H1 (cell line): ENCODE measurements at regions of chr1 and their contacts with region 1.

Region 1: GRCh38 chr1:160997323-160998038 is 23.5 kb downstream of the F11R start:
- DNase-seq: no peak
- H3K4me3 ChIP-seq: no peak overlapping the region
- H3K27ac ChIP-seq: no peak overlapping the region
- H3K4me1 ChIP-seq: peaks cover 0 to 3% (median 0%) of the 10 kb centered on the region in 4 experiments; a peak in 1 of 7 replicates
- H3K27me3 ChIP-seq: no peaks in the 10 kb centered on the region
- CTCF ChIP-seq: peak; percentile 57 to 77 (median 71)
- EP300 ChIP-seq: no peak
- POLR2A ChIP-seq: no peak
- RAD21 ChIP-seq: peak; percentile 63 to 80

Region 2: GRCh38 chr1:161013488-161014230 is 16.2 kb after region 1 on chr1:
- CTCF ChIA-PET with region 1: interaction called, 58 read pairs
- POLR2A ChIA-PET with region 1: interaction called, 11 read pairs
- DNase-seq: peak in 1 of 2 experiments; percentile 69
- H3K4me3 ChIP-seq: peak overlapping the region in 2 of 4 experiments; percentile 21 to 24; a peak in 3 of 8 replicates
- H3K27ac ChIP-seq: peak overlapping the region; percentile 66; the same call in 1 of the 2 replicates
- H3K4me1 ChIP-seq: peaks cover 15 to 29% (median 21%) of the 10 kb centered on the region in 4 experiments
- H3K27me3 ChIP-seq: no peaks in the 10 kb centered on the region
- CTCF ChIP-seq: no peak
- EP300 ChIP-seq: peak in 1 of 2 experiments; percentile 40; a peak in 1 of 3 replicates
- POLR2A ChIP-seq: peak; percentile 28 to 32; a peak in 2 of 3 replicates
- RAD21 ChIP-seq: no peak

Region 3: GRCh38 chr1:161021165-161021960 is 23.9 kb after region 1 on chr1:
- CTCF ChIA-PET with region 1: interaction called, 26 read pairs
- POLR2A ChIA-PET with region 1: interaction called, 16 read pairs
- DNase-seq: peak; percentile 93 to 99
- H3K4me3 ChIP-seq: peak overlapping the region; percentile 79 to 97 (median 95)
- H3K27ac ChIP-seq: peak overlapping the region; percentile 74; the same call in 1 of the 2 replicates
- H3K4me1 ChIP-seq: peaks cover 7 to 17% (median 13%) of the 10 kb centered on the region in 4 experiments
- H3K27me3 ChIP-seq: no peaks in the 10 kb centered on the region
- CTCF ChIP-seq: no peak; a peak in 1 of 4 replicates
- EP300 ChIP-seq: no peak; a peak in 1 of 3 replicates
- POLR2A ChIP-seq: peak; percentile 87 to 95
- RAD21 ChIP-seq: no peak; a peak in 1 of 4 replicates

Region 4: DNA sequence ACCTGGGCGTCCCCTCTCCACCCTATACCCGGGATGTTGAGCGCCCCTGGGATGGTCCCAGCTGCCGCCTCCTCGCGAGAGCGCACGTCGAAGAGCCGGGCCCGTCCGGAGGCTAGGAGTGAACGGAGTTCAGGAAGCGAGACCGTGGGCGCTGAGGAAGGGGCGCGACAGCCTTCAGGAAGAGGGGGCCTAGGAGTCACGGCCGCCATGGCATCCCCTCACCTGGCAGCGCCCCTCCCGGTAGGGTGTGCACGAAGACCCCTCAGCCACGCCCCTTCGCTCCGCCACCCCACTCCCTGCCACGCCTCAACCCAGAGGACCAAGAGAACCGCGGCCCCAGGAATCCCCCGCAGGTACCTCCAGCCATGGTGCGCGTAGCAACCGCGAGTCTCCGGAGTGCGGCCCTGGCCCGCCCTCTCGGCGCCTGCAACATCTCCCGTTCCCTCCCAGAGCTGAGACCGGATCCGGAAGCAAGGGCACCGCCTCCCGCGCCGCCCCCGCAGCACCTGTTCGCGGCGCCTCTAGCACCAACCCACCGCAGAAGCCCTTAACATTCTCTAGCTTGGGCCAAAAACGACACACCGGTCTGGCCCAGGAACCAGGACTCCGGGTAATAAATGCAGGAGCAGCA is 41.2 kb after region 1 on chr1 and contains the start of gene TSTD1:
- CTCF ChIA-PET with region 1: interaction called, 17 read pairs
- POLR2A ChIA-PET with region 1: interaction called, 3 read pairs
- DNase-seq: peak in 1 of 2 experiments; percentile 88
- H3K4me3 ChIP-seq: peak within 1 kb of the TSS; percentile 64 to 97 (median 85)
- H3K27ac ChIP-seq: 0 out of 2 replicates have a peak within 1 kb of the TSS, but pooled peaks have one; percentile 22
- H3K4me1 ChIP-seq: peaks cover 5 to 11% (median 8%) of the 10 kb centered on the region in 4 experiments; a peak in 6 of 7 replicates
- H3K27me3 ChIP-seq: no peaks in the 10 kb centered on the region
- CTCF ChIP-seq: peak in 1 of 3 experiments; percentile 34; a peak in 2 of 4 replicates
- EP300 ChIP-seq: no peak
- POLR2A ChIP-seq: peak; percentile 62 to 68
- RAD21 ChIP-seq: peak in 1 of 2 experiments; percentile 3; a peak in 1 of 4 replicates
- total RNA-seq, gene TSTD1: 60.4 and 60.9 TPM in 2 replicates

Region 5: DNA sequence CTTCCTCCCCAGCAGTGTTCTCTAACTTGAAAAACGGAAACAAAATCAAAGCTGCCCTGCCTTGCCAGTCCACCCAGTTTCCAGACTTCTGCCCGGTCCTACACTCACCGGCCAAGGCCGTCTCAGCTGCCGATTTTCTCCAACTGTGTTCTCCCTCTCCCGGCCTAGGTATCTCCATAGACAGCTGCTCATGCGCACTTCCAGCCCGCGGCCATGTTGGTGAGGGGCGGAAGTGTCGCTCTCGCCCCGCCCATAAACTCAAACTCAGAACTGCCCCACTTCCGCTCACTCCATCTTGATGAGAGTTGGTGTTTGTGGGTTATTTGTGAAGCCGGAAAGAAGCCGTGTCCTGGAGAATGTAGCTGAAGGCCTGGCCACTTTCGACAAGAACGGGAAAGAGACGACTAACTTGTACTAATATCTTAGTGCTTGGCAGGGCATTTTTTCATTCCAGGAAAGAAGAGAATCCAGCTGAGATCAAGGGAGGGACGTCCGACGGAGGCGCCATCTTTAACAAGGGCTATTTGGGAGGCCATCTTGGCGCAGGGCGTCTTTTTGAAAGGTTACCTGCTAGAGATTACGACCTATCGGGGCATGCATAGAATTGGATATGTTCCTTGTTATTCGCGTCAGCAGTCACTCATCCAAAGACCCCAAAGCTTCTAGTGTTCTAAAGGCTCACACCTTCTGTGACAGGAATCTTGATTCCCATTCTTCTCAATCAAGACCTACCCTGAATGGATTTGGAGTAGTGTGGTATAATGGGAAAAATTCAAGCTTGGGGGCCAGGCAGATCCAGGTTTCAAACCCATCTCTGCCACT is 48.5 kb after region 1 on chr1 and contains the start of gene USF1:
- CTCF ChIA-PET with region 1: interaction called, 9 read pairs
- POLR2A ChIA-PET with region 1: interaction called, 11 read pairs
- DNase-seq: peak; percentile 86 to 93
- H3K4me3 ChIP-seq: peak within 1 kb of the TSS; percentile 75 to 98 (median 87)
- H3K27ac ChIP-seq: peak within 1 kb of the TSS; percentile 97
- H3K4me1 ChIP-seq: peaks cover 0 to 4% (median 1%) of the 10 kb centered on the region in 4 experiments; a peak in 2 of 7 replicates
- H3K27me3 ChIP-seq: peaks cover 0 to 17% (median 8%) of the 10 kb centered on the region in 4 experiments; a peak in 6 of 7 replicates
- CTCF ChIP-seq: no peak
- EP300 ChIP-seq: no peak
- POLR2A ChIP-seq: peak; percentile 78 to 96
- RAD21 ChIP-seq: no peak
- total RNA-seq, gene USF1: 68.9 and 74.6 TPM in 2 replicates

Region 6: GRCh38 chr1:161139765-161140164 is 142.3 kb after region 1 on chr1:
- CTCF ChIA-PET with region 1: interaction called, 10 read pairs
- POLR2A ChIA-PET with region 1: no interaction called
- DNase-seq: no peak
- H3K4me3 ChIP-seq: no peak overlapping the region
- H3K27ac ChIP-seq: no peak overlapping the region
- H3K4me1 ChIP-seq: no peaks in the 10 kb centered on the region
- H3K27me3 ChIP-seq: no peaks in the 10 kb centered on the region
- CTCF ChIP-seq: peak in 2 of 3 experiments; percentile 24 to 43; a peak in 2 of 4 replicates
- EP300 ChIP-seq: no peak
- POLR2A ChIP-seq: no peak
- RAD21 ChIP-seq: peak; percentile 60 to 68